H1 (cell line): ENCODE measurements at regions of chr7 and their contacts with region 1.

Region 1: GRCh38 chr7:3984456-3984855 is 683.4 kb downstream of the SDK1 start:
- DNase-seq: no peak
- H3K4me3 ChIP-seq: no peak overlapping the region
- H3K27ac ChIP-seq: no peak overlapping the region
- H3K4me1 ChIP-seq: peaks cover 1 to 9% (median 7%) of the 10 kb centered on the region in 4 experiments; a peak in 5 of 7 replicates
- H3K27me3 ChIP-seq: no peaks in the 10 kb centered on the region
- CTCF ChIP-seq: no peak
- EP300 ChIP-seq: no peak
- POLR2A ChIP-seq: no peak
- RAD21 ChIP-seq: no peak

Region 2: GRCh38 chr7:3965794-3966395 is 18.6 kb before region 1 on chr7:
- CTCF ChIA-PET with region 1: no interaction called
- POLR2A ChIA-PET with region 1: no interaction called
- DNase-seq: no peak
- H3K4me3 ChIP-seq: no peak overlapping the region
- H3K27ac ChIP-seq: no peak overlapping the region
- H3K4me1 ChIP-seq: no peaks in the 10 kb centered on the region; a peak in 1 of 7 replicates
- H3K27me3 ChIP-seq: no peaks in the 10 kb centered on the region
- CTCF ChIP-seq: no peak
- EP300 ChIP-seq: no peak
- POLR2A ChIP-seq: no peak
- RAD21 ChIP-seq: no peak

Region 3: GRCh38 chr7:3995187-3995586 is 10.7 kb after region 1 on chr7:
- CTCF ChIA-PET with region 1: interaction called, 14 read pairs
- POLR2A ChIA-PET with region 1: no interaction called
- DNase-seq: peak; percentile 78 to 91
- H3K4me3 ChIP-seq: no peak overlapping the region
- H3K27ac ChIP-seq: no peak overlapping the region
- H3K4me1 ChIP-seq: peaks cover 0 to 3% (median 1%) of the 10 kb centered on the region in 4 experiments; a peak in 2 of 7 replicates
- H3K27me3 ChIP-seq: no peaks in the 10 kb centered on the region
- CTCF ChIP-seq: peak; percentile 94 to 100 (median 98)
- EP300 ChIP-seq: no peak
- POLR2A ChIP-seq: no peak
- RAD21 ChIP-seq: peak; percentile 62 to 72